ENCODE measurements at regions of chr2 and their contacts with region 1.

Region 1: GRCh38 chr2:23624378-23624777 is 239.4 kb downstream of the KLHL29 start:
- DNase-seq: peak; percentile 15
- H3K4me3 Mint-ChIP-seq: no peak overlapping the region
- H3K27ac Mint-ChIP-seq: no peak overlapping the region
- H3K4me1 Mint-ChIP-seq: no peaks in the 10 kb centered on the region
- H3K27me3 Mint-ChIP-seq: no peaks in the 10 kb centered on the region

Region 2: GRCh38 chr2:23636426-23636825 is 12.0 kb after region 1 on chr2:
- CTCF ChIA-PET with region 1: interaction called, 4 read pairs
- POLR2A ChIA-PET with region 1: interaction called, 10 read pairs
- DNase-seq: no peak
- H3K4me3 Mint-ChIP-seq: no peak overlapping the region
- H3K27ac Mint-ChIP-seq: no peak overlapping the region
- H3K4me1 Mint-ChIP-seq: no peaks in the 10 kb centered on the region
- H3K27me3 Mint-ChIP-seq: no peaks in the 10 kb centered on the region